IMR-90 (cell line): ENCODE measurements at regions of chr6 and their contacts with region 1.

Region 1: DNA sequence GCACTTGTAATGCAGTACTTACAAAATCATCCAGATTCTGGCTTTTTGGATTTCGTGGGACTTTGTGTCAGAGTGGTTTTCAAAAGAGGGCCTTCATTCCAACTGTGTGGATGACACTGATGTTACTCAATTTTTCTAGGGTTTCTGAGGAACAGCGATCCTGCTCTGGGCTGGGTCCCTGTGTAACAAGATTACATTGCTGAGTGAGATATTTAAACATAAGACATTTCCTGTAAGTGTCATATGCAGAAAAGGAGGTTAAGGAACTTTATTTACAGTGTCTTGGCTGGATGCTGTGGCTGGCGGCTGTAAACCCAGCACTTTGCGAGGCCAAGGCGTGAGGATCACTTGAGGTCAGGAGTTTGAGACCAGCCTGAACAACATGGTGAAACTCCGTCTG is 6.7 kb downstream of the ZFAND3 start:
- DNase-seq: no peak
- ATAC-seq: peak; percentile 40; the same call in 1 of the 2 replicates
- H3K4me3 ChIP-seq: no peak overlapping the region
- H3K27ac ChIP-seq: no peak overlapping the region
- H3K4me1 ChIP-seq: peaks cover 24% of the 10 kb centered on the region
- H3K27me3 ChIP-seq: no peaks in the 10 kb centered on the region
- CTCF ChIP-seq: no peak
- POLR2A ChIP-seq: no peak
- RAD21 ChIP-seq: no peak

Region 2: DNA sequence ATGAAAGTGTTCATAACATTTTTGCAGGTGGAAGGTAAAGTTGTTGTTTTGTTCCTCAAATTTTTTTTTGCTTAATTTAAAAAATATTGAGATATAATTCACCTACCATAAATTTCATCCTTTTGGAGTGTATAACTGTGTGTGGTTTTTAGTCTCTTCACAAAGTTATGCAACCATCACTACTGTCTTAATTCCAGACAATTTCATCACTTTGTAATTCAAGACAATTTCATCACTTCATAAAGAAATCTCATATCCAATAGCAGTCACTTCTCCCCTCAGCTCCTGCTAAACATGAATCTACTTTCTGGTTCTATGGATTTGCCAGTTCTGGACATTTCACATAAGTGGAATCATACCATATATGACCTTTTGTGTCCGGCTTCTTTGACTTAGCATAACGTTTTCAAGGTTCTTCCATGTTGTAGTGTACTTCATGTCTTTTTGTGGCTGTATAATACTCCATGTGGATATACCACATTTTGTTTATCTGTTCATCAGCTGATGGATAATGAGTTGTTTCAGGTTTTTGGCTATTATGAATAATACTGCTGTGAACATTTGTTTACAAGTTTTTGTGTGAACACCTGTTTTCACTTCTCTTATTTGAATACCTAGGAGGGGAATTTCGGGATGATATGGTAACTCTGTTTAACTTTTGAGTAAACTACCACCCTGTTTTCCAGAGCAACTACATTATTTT is 12.2 kb after region 1 on chr6:
- CTCF ChIA-PET with region 1: interaction called, 3 read pairs
- POLR2A ChIA-PET with region 1: no interaction called
- dilution Hi-C with region 1: no loop called
- in situ Hi-C with region 1: no loop called
- intact Hi-C with region 1: loop called (anchors 1 kb)
- DNase-seq: peak; percentile 56
- ATAC-seq: peak; percentile 40
- H3K4me3 ChIP-seq: no peak overlapping the region
- H3K27ac ChIP-seq: no peak overlapping the region
- H3K4me1 ChIP-seq: no peaks in the 10 kb centered on the region
- H3K27me3 ChIP-seq: no peaks in the 10 kb centered on the region
- CTCF ChIP-seq: no peak
- POLR2A ChIP-seq: no peak
- RAD21 ChIP-seq: no peak

Region 3: GRCh38 chr6:37860226-37860839 is 34.1 kb after region 1 on chr6:
- CTCF ChIA-PET with region 1: interaction called, 10 read pairs
- POLR2A ChIA-PET with region 1: no interaction called
- dilution Hi-C with region 1: no loop called
- in situ Hi-C with region 1: no loop called
- intact Hi-C with region 1: no loop called
- DNase-seq: peak; percentile 65
- ATAC-seq: peak; percentile 53; the same call in 1 of the 2 replicates
- H3K4me3 ChIP-seq: no peak overlapping the region
- H3K27ac ChIP-seq: no peak overlapping the region
- H3K4me1 ChIP-seq: peaks cover 5% of the 10 kb centered on the region
- H3K27me3 ChIP-seq: no peaks in the 10 kb centered on the region
- CTCF ChIP-seq: peak; percentile 66
- POLR2A ChIP-seq: no peak
- RAD21 ChIP-seq: peak; percentile 58